Panc1 (cell line): ENCODE measurements at regions of chr11 and their contacts with region 1.

Region 1: GRCh38 chr11:68313574-68314202 is 1.3 kb downstream of the LRP5 start:
- DNase-seq: no peak
- ATAC-seq: no peak
- H3K4me3 ChIP-seq: peak overlapping the region; percentile 73 to 75
- H3K27ac ChIP-seq: peak overlapping the region; percentile 99
- H3K4me1 ChIP-seq: peaks cover 54% of the 10 kb centered on the region
- H3K27me3 ChIP-seq: no peaks in the 10 kb centered on the region
- CTCF ChIP-seq: no peak

Region 2: DNA sequence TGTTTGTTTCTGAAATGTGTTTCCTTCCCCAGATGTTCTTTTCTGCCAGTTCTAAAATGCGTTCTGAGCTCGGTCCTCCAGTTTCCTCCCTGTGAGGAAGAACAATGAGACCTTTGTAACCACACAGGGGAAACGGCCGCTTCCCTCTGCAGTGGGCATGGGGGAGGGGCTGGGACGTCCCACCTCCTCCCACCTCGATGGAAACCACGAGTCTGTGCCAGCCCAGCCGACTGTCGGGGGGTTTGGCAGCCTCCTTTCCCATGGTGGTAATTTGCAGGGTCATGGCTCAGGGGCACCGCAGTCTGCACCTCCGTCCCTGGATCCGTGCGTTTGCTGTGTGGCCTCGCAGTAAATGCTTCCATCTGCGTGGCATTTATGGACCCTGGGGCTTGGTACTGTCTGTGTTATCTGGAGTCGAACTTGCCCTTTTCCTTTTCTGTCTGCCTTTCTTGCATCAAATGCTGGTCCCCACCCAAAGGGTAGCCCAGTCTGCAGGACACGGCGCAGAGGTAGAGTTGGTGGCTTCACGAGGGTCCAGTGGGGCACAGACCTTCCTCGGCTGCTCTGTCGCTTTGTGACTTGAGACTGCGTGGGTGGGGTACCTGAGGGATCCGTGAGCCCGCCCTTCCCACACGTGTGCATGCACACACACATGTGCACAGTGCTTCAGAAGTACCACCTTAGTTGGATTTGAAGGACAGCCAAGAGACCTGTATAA is 14.8 kb after region 1 on chr11:
- CTCF ChIA-PET with region 1: interaction called, 13 read pairs
- POLR2A ChIA-PET with region 1: no interaction called
- in situ Hi-C with region 1: no loop called
- intact Hi-C with region 1: no loop called
- DNase-seq: no peak
- ATAC-seq: peak; percentile 71
- H3K4me3 ChIP-seq: peak overlapping the region in 1 of 2 experiments; percentile 24; a peak in 2 of 4 replicates
- H3K27ac ChIP-seq: peak overlapping the region; percentile 95
- H3K4me1 ChIP-seq: peaks cover 86% of the 10 kb centered on the region
- H3K27me3 ChIP-seq: no peaks in the 10 kb centered on the region
- CTCF ChIP-seq: no peak

Region 3: DNA sequence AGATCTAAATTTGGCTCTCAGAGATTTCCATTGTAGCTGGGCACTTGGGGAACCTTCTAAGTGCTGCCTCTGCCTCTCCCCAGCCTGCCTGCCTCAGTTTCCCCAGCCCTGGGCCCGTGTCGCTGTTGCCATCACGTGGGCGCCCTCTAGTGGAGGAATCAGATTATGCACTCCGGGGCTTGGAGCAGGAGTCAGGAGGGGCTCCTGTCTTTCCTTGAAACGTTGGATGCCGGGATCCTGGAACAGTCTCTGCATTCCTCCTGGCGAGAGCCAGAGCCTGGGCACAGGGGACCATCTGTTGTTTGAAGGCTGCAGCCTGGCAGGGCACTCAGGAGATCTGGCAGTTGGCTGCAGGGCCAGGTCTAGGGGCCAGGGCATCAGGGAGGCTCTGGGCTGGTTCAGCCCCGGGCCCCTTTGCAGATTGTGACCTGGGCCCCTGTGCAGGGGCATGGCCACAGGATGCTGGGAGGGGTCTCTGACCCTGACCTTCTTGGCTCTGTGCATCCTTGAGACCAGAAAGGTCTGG is 70.4 kb after region 1 on chr11:
- CTCF ChIA-PET with region 1: interaction called, 4 read pairs
- POLR2A ChIA-PET with region 1: interaction called, 5 read pairs
- in situ Hi-C with region 1: no loop called
- intact Hi-C with region 1: loop called (anchors 5 kb)
- DNase-seq: peak; percentile 32
- ATAC-seq: no peak
- H3K4me3 ChIP-seq: no peak overlapping the region
- H3K27ac ChIP-seq: peak overlapping the region; percentile 75; the same call in 1 of the 2 replicates
- H3K4me1 ChIP-seq: peaks cover 50% of the 10 kb centered on the region
- H3K27me3 ChIP-seq: no peaks in the 10 kb centered on the region
- CTCF ChIP-seq: peak; percentile 99

Region 4: DNA sequence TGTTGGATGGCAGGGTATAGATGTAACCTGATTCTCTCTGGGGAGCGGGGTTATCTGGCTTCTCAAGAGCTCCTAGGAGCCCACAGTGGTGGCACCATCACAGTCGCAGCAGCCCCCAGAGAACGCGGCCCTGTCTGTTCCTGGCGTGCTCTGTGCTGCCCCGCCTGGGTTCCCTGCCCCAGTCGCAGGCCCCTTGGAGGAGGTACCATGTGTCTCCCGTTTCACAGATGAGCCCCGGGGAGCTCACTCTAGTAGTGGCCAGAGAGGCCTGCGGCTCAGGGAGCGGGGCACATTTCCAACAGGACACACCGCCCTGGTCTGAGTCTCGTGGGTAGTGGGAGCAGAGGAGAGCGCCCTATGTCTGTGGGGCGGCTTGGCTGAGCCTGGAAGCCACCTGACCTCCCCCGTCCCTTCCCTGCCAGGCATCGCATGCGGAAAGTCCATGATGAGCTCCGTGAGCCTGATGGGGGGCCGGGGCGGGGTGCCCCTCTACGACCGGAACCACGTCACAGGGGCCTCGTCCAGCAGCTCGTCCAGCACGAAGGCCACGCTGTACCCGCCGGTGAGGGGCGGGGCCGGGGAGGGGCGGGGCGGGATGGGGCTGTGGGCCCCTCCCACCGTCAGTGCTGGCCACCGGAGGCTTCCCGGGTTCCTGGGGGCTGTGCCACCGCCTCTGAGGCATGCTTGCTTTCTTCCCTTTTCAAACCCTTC is 125.8 kb after region 1 on chr11:
- CTCF ChIA-PET with region 1: no interaction called
- POLR2A ChIA-PET with region 1: interaction called, 11 read pairs
- in situ Hi-C with region 1: no loop called
- intact Hi-C with region 1: no loop called
- DNase-seq: no peak
- ATAC-seq: no peak
- H3K4me3 ChIP-seq: no peak overlapping the region
- H3K27ac ChIP-seq: no peak overlapping the region
- H3K4me1 ChIP-seq: 0 out of 2 replicates have a peak, but pooled peaks cover 4% of the 10 kb centered on the region
- H3K27me3 ChIP-seq: no peaks in the 10 kb centered on the region
- CTCF ChIP-seq: no peak

Region 5: DNA sequence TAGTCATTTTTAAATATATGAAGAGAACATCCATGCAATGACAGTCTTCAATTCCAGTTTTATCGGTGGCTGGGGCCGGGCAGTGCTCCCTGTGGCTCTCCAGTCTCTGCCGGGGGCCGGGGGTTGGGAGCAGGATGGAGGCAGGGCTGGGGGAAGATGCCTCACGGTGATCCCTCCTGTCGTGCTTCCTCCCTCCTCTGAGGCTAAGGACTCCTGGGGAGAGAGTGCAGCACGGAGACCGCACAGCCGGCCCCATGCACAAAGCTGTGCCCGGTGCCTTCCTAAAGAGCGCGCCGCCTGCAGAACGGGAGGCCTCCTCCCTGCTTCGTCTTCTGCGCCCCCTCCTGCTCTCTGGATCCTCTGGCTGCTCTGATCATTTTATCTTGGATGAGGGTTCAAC is 391.2 kb after region 1 on chr11:
- CTCF ChIA-PET with region 1: no interaction called
- POLR2A ChIA-PET with region 1: no interaction called
- in situ Hi-C with region 1: no loop called
- intact Hi-C with region 1: no loop called
- DNase-seq: no peak
- ATAC-seq: peak; percentile 66
- H3K4me3 ChIP-seq: no peak overlapping the region
- H3K27ac ChIP-seq: no peak overlapping the region
- H3K4me1 ChIP-seq: no peaks in the 10 kb centered on the region
- H3K27me3 ChIP-seq: peaks cover 3% of the 10 kb centered on the region; the same call in 1 of the 2 replicates
- CTCF ChIP-seq: no peak